ENCODE measurements at regions of chr1 and their contacts with region 1.

Region 1: DNA sequence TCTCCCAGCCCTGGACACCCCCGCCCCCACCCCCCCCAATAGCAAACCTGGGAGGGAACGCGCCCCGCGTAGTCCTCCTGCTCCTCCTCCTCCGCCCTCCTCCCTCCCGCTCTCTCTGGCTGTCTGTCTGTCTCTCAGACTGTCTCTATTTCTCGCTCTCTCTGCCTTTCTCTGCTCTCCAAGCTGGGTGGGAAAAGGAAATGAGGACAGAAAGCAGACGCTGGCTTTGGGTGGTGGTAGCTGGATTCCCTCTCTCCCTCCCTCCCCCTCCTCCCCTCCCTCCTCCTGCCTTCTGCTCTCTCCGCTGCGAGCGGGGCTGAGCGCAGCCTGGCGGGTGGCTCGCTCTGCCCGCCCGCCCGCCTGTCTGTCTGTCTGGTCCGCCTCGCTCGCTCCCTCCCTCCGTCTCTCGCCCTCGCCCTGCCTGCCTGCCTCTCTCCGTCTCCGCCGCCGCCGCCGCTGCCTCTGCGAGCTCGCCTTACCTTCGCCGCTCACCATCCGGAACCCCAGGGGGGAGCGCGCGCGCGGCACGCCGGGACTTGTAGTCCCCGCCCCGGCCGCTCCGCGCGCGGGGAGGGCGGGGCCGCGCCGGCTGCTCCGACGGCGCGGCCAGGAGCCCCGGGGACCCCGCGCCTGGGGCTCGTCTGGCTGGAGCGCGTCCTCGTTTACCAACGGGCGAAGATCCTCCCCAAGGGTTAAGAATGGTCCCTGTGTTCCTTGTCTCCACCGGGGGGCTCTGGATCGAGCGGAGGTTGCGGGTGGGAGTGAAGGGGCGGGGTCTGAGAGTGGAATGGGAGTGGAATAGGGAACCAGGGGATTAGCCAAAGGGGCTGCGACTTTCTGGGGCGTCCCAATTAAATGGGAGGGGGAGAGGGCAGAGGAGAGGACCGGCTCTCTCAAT is at the start of gene AHDC1:
- DNase-seq: no peak
- H3K4me3 ChIP-seq: peak within 1 kb of the TSS; percentile 82
- H3K27me3 ChIP-seq: no peaks in the 10 kb centered on the region
- CTCF ChIP-seq: peak; percentile 18; the same call in 1 of the 2 replicates
- polyA plus RNA-seq, gene AHDC1: 3.5 and 4.1 TPM in 2 replicates

Region 2: DNA sequence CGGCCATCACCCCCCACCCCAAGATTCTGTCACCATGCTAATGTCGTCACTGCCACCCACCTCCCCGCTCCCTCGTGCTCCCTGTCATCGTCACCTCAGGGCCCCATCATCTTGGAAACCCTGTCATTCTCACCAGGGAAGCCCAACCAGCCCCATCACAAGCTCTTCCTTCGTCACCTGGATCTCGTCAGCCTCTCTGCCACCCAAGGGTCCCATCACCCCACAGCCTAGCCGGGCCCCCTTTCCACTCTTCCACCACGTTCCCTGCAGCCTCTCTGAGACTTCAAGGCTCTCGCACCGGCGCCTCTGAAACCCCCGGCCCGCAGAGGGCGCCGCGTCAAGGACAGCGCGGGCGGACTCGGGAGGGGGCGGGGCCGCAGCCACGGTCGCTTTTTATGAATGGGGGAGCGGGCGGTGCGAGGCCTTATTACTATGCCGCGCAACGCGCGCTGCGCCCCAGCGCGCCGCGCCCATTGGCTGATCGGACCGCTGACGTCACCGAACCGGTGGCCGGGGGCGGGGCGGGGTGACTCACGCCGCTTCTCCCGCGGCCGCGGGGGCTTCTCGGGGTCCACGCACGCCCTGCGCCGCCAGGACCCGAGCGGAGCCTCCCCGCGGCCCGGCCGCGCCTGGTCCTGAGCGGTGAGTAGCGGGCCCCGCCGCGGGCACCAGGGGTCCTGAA is 211.7 kb before region 1 on chr1 and contains the start of gene GPR3:
- CTCF ChIA-PET with region 1: interaction called, 92 read pairs
- POLR2A ChIA-PET with region 1: no interaction called
- DNase-seq: no peak
- H3K4me3 ChIP-seq: peak within 1 kb of the TSS; percentile 70
- H3K27me3 ChIP-seq: no peaks in the 10 kb centered on the region
- CTCF ChIP-seq: peak; percentile 77
- polyA plus RNA-seq, gene GPR3: 1.0 and 1.8 TPM in 2 replicates

Region 3: DNA sequence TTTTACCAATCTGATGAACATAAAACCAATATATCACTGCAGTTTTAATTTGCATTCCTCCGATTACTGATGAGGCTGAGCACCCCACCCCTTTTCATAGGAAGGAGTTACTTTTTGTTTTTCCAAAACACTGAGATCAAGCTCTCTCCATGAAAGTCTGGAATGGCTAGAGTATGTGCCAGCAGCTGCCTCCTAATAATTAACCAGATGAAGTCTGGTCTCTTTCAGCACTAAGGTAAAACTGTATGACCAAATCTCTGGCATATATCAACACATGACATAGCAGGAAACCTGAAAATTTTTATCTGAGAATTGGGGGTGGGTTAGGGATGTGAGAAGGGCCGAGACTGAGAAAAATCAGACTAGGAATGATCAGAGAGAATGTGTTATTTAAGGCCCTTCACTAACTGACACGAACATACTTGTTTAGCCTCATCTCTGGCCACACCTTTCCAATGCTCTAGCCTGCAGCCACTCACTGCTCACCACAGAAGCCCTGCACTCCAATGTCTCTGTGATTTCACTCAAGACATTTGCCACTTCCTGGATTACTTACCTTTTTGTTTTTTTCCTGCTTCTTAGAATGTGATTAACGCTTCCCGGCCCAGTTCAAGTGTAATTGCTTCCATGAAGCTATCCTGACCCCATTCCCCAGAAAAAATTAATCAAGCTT is 148.7 kb before region 1 on chr1:
- CTCF ChIA-PET with region 1: no interaction called
- POLR2A ChIA-PET with region 1: no interaction called
- DNase-seq: no peak
- H3K4me3 ChIP-seq: no peak overlapping the region
- H3K27me3 ChIP-seq: no peaks in the 10 kb centered on the region
- CTCF ChIP-seq: no peak

Region 4: DNA sequence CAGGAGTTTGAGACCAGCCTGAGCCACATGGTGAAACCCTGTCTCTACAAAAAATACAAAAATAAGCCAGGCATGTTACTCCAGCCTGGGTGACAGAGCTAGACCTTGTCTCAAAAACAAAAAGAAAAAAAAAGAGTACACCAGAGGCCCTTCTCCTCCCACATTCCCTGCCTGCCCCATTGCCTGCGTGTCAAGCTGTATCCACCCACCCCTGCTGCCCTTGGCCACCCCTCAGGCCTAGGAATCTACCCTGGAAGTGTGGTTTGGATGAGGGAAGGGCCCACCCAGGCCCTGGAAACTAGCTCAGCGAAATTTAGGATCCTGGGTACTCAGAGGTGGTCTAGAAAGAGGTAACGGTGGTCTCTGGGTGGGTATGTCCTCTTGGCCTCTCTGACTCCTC is 88.3 kb before region 1 on chr1:
- CTCF ChIA-PET with region 1: interaction called, 10 read pairs
- POLR2A ChIA-PET with region 1: no interaction called
- DNase-seq: no peak
- H3K4me3 ChIP-seq: no peak overlapping the region
- H3K27me3 ChIP-seq: no peaks in the 10 kb centered on the region
- CTCF ChIP-seq: no peak

Region 5: GRCh38 chr1:27556781-27557595 is 46.9 kb before region 1 on chr1:
- CTCF ChIA-PET with region 1: interaction called, 238 read pairs
- POLR2A ChIA-PET with region 1: no interaction called
- DNase-seq: no peak
- H3K4me3 ChIP-seq: peak overlapping the region; percentile 10; the same call in 1 of the 2 replicates
- H3K27me3 ChIP-seq: no peaks in the 10 kb centered on the region
- CTCF ChIP-seq: peak; percentile 94

Region 6: DNA sequence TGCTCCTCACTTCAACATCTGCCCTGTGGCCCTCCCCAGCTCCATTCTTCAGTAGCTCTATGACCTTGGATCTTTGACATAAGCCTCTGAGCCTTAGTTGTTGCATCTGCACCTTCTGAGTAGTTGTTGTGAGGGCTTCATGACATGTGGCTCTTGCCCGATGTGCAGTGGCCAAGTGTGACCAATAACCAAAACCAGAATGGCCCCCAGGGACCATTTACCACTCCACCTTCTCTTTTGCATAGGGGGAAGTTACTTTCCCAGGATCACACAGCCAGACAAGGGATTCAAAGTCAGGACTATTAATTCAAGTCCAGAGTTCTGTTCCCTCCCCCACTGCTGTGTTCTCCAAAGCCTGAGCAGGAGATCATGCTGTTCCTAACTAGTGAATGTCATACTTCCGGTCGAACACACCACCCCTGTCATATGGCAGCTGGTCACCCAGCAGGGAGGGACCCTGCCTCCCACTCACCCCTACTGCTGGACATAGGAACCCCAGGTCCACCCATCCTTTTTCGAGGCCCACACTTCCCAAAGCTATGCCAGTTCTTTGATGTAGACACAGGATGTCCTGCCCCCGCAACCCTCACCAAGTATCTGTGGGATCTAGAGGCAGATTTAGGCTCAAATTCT is 27.0 kb after region 1 on chr1:
- CTCF ChIA-PET with region 1: interaction called, 15 read pairs
- POLR2A ChIA-PET with region 1: no interaction called
- DNase-seq: no peak
- H3K4me3 ChIP-seq: no peak overlapping the region
- H3K27me3 ChIP-seq: peaks cover 4% of the 10 kb centered on the region; the same call in 1 of the 2 replicates
- CTCF ChIP-seq: no peak

Region 7: GRCh38 chr1:27763358-27763757 is 159.4 kb after region 1 on chr1:
- CTCF ChIA-PET with region 1: no interaction called
- POLR2A ChIA-PET with region 1: interaction called, 12 read pairs
- DNase-seq: no peak
- H3K4me3 ChIP-seq: no peak overlapping the region
- H3K27me3 ChIP-seq: no peaks in the 10 kb centered on the region
- CTCF ChIP-seq: no peak